ENCODE measurements at regions of chr3 and their contacts with region 1.

Region 1: DNA sequence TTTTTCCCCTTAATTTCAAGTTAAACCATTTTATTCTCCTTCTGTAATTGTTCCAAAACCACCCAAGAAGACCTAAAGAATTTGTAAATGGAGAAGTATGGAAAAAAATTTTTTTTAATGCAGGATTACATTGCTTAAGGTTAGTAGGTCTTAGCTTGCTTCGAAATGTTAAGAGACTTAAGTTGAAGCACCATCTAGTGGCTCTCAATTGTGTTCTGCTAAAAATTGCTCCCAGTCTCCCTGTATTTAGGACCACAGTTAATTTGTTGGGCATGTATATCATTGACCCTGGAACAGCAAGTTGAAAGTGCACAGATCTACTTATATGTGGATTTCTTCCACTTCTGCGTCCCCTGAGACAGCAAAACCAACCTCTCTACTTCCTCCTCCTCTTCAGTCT is 32.4 kb downstream of the CD200R1L start:
- DNase-seq: no peak
- ATAC-seq: peak; percentile 35

Region 2: GRCh38 chr3:112779558-112780480 is 34.4 kb before region 1 on chr3:
- intact Hi-C with region 1: loop called (anchors 1 kb)
- DNase-seq: no peak
- ATAC-seq: peak; percentile 58